ENCODE measurements at regions of chr5 and their contacts with region 1.

Region 1: DNA sequence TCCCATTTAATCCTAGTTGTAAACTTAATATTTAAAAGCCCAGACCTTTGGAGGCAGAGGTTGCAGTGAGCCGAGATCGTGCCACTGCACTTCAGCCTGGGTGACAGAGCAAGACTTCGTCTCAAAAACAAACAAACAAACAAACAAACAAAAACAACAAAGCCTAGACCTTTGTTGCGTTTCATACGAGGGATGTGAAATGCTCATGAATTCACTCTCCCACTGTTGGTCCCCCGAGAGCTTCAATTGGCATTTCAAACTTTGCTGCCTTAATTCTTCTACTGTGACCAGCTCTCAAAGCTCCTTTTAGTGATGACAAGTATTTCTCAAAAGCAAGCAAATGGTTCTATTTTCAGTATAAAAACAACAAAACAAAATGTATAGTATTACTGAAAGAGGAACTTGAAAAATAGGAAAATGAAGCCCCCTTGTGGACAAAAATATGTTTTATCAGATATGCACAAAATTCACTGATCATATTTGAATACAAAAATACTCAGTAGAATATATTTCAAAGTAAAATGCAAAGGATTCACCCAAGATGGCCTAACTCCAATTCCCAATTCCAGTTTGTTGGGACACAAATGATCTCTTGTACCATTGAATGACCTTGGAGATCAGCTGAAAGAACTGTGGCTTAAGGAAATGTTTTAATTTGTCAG is 140.4 kb downstream of the ESM1 start:
- DNase-seq: peak in 6 of 9 donors; percentile 38 to 67 (median 60)
- ATAC-seq: peak; percentile 34
- H3K4me3 ChIP-seq: no peak overlapping the region
- H3K4me3 Mint-ChIP-seq: peak overlapping the region in 7 of 10 donors; percentile 2 to 68 (median 52)
- H3K27ac ChIP-seq: no peak overlapping the region
- H3K27ac Mint-ChIP-seq: peak overlapping the region in 6 of 9 donors; percentile 45 to 63 (median 56)
- H3K4me1 ChIP-seq: no peaks in the 10 kb centered on the region
- H3K4me1 Mint-ChIP-seq: peaks cover 0 to 21% (median 5%) of the 10 kb centered on the region in 7 donors
- H3K27me3 ChIP-seq: no peaks in the 10 kb centered on the region
- H3K27me3 Mint-ChIP-seq: peaks cover 8 to 18% (median 12%) of the 10 kb centered on the region in 5 donors

Region 2: DNA sequence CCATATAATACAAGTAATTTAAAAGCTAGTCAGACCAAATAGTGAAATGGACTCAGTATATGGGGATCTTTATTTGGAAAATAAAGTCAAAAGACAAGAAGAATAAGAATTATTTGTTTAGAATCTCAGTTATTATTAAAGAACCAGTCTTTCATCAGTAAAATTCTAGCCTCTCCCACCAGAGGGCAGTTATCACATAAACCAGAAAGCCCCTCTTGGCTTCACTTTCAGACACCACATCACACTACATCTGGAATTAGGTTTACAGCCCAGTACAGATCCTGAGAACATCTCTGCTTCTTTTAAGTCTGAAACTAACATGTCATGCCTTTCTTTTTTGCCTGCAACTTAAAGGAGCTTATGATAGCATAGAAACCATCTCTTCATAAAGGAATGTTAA is 401.8 kb before region 1 on chr5:
- CTCF ChIA-PET with region 1: no interaction called
- POLR2A ChIA-PET with region 1: no interaction called
- intact Hi-C with region 1: loop called in 1 of 2 experiments (anchors 1 kb)
- DNase-seq: no peak
- ATAC-seq: no peak
- H3K4me3 ChIP-seq: no peak overlapping the region
- H3K4me3 Mint-ChIP-seq: no peak overlapping the region
- H3K27ac ChIP-seq: no peak overlapping the region
- H3K27ac Mint-ChIP-seq: peak overlapping the region in 1 of 9 donors; percentile 22
- H3K4me1 ChIP-seq: peaks cover 0 to 18% of the 10 kb centered on the region in 2 donors
- H3K4me1 Mint-ChIP-seq: peaks cover 9 to 39% (median 36%) of the 10 kb centered on the region in 7 donors
- H3K27me3 ChIP-seq: no peaks in the 10 kb centered on the region
- H3K27me3 Mint-ChIP-seq: peaks cover 0 to 3% (median 0%) of the 10 kb centered on the region in 5 donors

Region 3: GRCh38 chr5:54619731-54620547 is 225.1 kb before region 1 on chr5:
- CTCF ChIA-PET with region 1: interaction called, 6 read pairs
- POLR2A ChIA-PET with region 1: no interaction called
- intact Hi-C with region 1: loop called in 1 of 2 experiments (anchors 1 kb)
- DNase-seq: no peak
- ATAC-seq: peak; percentile 56
- H3K4me3 ChIP-seq: no peak overlapping the region
- H3K4me3 Mint-ChIP-seq: no peak overlapping the region
- H3K27ac ChIP-seq: no peak overlapping the region
- H3K27ac Mint-ChIP-seq: no peak overlapping the region
- H3K4me1 ChIP-seq: no peaks in the 10 kb centered on the region
- H3K4me1 Mint-ChIP-seq: peaks cover 6 to 27% (median 8%) of the 10 kb centered on the region in 7 donors
- H3K27me3 ChIP-seq: no peaks in the 10 kb centered on the region
- H3K27me3 Mint-ChIP-seq: peaks cover 0 to 29% (median 0%) of the 10 kb centered on the region in 5 donors

Region 4: GRCh38 chr5:54867310-54867944 is 22.4 kb after region 1 on chr5:
- CTCF ChIA-PET with region 1: interaction called, 23 read pairs
- POLR2A ChIA-PET with region 1: no interaction called
- intact Hi-C with region 1: loop called (anchors 1 kb)
- DNase-seq: peak in 7 of 9 donors; percentile 38 to 66 (median 59)
- ATAC-seq: peak; percentile 83
- H3K4me3 ChIP-seq: peak overlapping the region; percentile 33
- H3K4me3 Mint-ChIP-seq: peak overlapping the region; percentile 2 to 80 (median 52)
- H3K27ac ChIP-seq: no peak overlapping the region
- H3K27ac Mint-ChIP-seq: peak overlapping the region in 4 of 9 donors; percentile 44 to 60 (median 52)
- H3K4me1 ChIP-seq: no peaks in the 10 kb centered on the region
- H3K4me1 Mint-ChIP-seq: peaks cover 0 to 20% (median 9%) of the 10 kb centered on the region in 7 donors
- H3K27me3 ChIP-seq: no peaks in the 10 kb centered on the region
- H3K27me3 Mint-ChIP-seq: peaks cover 0 to 69% (median 11%) of the 10 kb centered on the region in 5 donors

Region 5: DNA sequence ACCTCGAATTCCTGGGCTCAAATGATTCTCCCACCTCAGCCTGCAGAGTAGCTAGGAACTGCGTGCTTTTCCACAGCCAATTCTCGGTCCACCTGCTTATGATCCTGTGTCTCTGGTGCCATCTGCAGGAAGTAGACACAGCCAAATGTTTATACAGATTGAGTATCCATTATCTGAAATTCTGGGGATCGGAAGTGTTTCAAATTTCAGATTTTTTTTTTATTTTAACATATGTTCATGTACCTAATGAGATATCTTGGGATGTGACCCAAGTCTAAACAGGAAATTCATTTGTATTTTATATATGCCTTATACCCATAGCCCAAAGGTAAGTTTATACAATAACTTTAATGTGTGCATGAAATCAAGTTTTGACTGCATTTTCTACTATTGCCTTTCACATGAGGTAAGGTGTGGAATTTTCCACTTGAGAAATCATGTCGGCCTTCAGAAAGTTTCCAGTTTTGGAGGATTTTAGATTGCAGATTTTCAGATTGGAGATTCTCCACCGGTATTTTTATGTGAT is 50.8 kb after region 1 on chr5:
- CTCF ChIA-PET with region 1: no interaction called
- POLR2A ChIA-PET with region 1: no interaction called
- intact Hi-C with region 1: no loop called
- DNase-seq: no peak
- ATAC-seq: peak; percentile 57
- H3K4me3 ChIP-seq: no peak overlapping the region
- H3K4me3 Mint-ChIP-seq: peak overlapping the region in 8 of 10 donors; percentile 20 to 77 (median 66)
- H3K27ac ChIP-seq: no peak overlapping the region
- H3K27ac Mint-ChIP-seq: peak overlapping the region in 4 of 9 donors; percentile 2 to 52 (median 38)
- H3K4me1 ChIP-seq: no peaks in the 10 kb centered on the region
- H3K4me1 Mint-ChIP-seq: peaks cover 1 to 6% (median 5%) of the 10 kb centered on the region in 7 donors
- H3K27me3 ChIP-seq: no peaks in the 10 kb centered on the region
- H3K27me3 Mint-ChIP-seq: peaks cover 17 to 81% (median 27%) of the 10 kb centered on the region in 5 donors

Region 6: DNA sequence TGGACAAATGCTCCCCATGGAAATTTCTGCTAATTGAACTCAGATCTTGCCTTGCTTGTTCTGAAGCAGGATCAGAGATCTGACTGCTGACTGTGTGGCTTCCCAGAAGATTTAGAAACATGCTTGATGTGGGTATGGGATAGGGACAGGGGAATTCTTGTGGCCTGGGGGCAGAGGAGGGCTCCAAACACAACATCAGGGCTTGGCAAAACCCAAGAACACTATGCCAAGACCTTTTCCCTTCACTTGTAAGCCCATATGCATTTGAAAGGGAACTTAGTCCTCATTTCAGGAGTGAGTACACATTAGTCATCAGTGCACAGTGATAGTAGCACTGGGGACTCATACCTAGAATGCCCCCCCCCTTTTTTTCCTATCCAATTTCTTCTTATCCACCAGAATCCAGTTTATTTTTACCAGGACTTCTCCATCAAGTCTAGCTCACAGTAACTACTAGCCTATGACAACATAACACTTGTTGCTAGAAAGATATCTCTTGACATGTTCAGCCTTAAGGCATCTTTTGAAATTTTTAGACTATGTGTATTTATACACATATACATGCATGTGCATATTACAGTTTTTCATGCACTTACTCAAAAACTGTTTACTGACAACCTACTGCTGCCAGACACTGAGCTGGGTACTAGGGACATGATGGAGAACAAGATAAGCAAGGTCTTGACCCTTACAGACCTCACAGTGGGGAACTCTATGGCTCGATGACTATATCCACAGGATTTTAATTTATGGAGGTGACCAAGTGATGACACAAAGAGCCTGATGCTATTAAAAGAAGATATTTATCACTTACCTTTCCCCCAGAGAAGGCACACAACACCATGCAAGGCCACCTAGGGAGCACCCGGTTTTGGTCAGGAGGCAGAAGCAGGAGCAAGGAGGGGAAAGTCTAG is 1812.0 kb after region 1 on chr5:
- CTCF ChIA-PET with region 1: no interaction called
- POLR2A ChIA-PET with region 1: no interaction called
- intact Hi-C with region 1: no loop called
- DNase-seq: no peak
- ATAC-seq: no peak
- H3K4me3 ChIP-seq: no peak overlapping the region
- H3K4me3 Mint-ChIP-seq: no peak overlapping the region
- H3K27ac ChIP-seq: no peak overlapping the region
- H3K27ac Mint-ChIP-seq: peak overlapping the region in 1 of 9 donors; percentile 23
- H3K4me1 ChIP-seq: no peaks in the 10 kb centered on the region
- H3K4me1 Mint-ChIP-seq: peaks cover 0 to 17% (median 8%) of the 10 kb centered on the region in 7 donors
- H3K27me3 ChIP-seq: no peaks in the 10 kb centered on the region
- H3K27me3 Mint-ChIP-seq: peaks cover 0 to 22% (median 0%) of the 10 kb centered on the region in 5 donors